Dorsolateral prefrontal cortex (tissue), 120 donors: ENCODE measurements at regions of chrX and their contacts with region 1.

Region 1: GRCh38 chrX:74382613-74383012 is 38.7 kb upstream of the SLC16A2 start:
- DNase-seq: peak; percentile 24 to 74 (median 50)
- H3K4me3 ChIP-seq: no peak overlapping the region
- H3K27ac ChIP-seq: no peak overlapping the region
- H3K27me3 ChIP-seq: peaks cover 0 to 75% (median 36%) of the 10 kb centered on the region in 45 donors
- CTCF ChIP-seq: peak; percentile 33 to 80 (median 68)

Region 2: DNA sequence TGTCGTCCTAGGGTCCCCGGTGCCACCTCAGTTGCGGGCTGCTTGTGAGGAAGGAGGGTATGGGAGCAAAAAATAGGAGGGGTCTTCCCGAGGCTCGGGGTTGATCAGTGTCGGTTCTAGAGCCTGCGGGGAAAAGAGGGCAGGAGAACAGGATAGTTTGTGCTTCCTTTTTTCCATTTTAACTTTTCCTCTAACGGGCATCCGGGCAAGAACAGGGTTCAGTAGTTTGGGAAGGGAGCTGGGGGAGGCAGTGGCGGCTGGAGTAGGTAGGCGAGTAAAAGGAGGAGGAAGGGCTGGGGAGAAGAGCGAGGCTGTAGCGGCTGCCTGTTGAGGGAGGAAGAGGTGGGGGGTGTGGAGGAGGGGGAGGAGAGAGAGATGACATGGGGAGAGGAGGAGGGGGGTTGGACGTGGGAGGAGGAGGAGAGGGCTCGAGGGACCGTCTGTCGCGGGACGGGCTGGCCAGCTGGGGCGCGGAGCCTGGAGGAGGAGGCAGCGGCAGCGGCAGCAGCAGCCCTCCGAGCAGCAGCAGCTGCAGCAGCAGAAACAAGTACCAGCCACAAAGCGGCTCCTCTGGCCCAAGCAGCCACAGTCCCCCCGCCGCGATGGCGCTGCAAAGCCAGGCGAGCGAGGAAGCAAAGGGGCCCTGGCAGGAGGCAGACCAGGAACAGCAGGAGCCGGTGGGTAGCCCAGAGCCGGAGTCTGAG is 38.6 kb after region 1 on chrX and contains the start of gene SLC16A2:
- intact Hi-C with region 1: loop called in 1 of 2 experiments (anchors 2 kb)
- DNase-seq: peak; percentile 47 to 79 (median 64)
- H3K4me3 ChIP-seq: peak within 1 kb of the TSS; percentile 42 to 74 (median 59)
- H3K27ac ChIP-seq: peak within 1 kb of the TSS; percentile 40 to 94 (median 85)
- H3K27me3 ChIP-seq: peaks cover 0 to 82% (median 17%) of the 10 kb centered on the region in 45 donors
- CTCF ChIP-seq: peak in 3 of 56 donors; percentile 8 to 14 (median 9)
- total RNA-seq, gene SLC16A2: 9.2 to 23.2 (median 14.5) TPM

Region 3: DNA sequence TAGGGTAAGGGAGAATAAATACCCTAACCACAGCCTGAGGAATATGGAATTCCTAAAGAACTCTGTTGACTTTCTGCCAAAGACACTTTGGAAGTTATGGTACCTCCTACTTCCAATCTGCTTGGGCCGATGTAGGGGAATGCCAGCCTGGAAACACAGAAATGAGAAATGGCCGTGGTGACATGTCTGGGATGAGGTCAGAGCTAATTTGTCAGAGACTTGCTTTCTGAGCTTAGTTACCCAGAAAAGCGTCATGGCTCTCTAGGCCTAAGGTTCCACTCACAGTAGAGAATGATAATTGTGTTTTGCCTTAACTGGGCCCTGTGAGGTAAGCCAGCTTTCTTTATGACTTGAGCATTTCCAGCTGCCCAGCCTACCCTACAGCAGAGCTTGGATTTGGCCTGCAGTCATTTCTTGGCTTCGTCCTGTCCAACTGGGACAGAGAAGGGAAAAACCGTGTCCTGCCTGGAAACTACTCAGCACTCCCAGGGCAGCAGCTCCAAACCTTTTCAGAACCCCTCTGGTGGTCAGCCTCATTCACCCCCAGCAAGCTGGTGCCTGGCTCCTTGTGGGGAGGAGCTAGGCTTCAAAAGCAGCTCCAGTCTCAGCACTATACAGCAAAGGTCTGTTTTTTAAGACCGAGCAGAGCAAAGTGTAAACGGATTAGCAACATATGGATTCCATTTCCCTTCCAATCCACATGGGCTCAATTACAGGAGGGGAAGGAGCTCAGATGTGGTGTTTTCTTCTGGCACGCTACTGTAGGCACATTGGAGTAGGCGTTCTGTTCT is 139.5 kb after region 1 on chrX:
- intact Hi-C with region 1: no loop called
- DNase-seq: no peak
- H3K4me3 ChIP-seq: no peak overlapping the region
- H3K27ac ChIP-seq: no peak overlapping the region
- H3K27me3 ChIP-seq: peaks cover 0 to 47% (median 5%) of the 10 kb centered on the region in 45 donors
- CTCF ChIP-seq: no peak

Region 4: DNA sequence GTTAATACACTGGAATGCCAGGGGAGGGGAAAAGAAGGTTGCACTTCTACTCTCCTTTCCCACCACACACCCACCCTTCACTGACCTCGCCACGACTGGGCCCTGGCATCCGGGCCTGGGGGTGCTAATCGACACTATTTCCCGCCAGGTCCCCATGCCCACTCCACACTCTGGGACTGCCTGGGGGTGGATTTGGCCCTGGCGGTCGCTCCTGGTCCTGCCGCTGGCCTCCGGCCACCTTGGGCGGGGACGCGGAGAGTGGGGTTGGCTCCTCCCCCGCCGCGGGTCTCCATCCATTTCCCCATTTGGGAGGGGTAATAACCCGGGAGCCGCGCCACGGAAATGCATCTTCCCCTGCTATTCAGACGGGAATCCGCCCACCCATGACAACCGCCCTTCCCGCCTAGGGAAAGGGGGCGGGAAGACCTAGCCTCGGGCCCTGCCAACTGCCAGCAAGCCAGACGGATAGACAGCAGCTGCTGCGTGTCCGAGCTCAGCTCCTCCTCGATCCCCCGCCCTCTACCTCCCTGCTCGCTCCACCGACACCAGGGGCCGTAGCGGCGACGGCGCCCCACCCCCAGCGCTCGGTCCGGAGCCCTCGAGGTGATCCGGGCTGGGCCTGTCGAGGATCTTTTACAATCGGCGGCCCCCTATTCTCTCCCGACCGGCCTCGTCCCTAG is 153.7 kb after region 1 on chrX:
- intact Hi-C with region 1: loop called (anchors 5 kb)
- DNase-seq: peak; percentile 31 to 72 (median 64)
- H3K4me3 ChIP-seq: peak overlapping the region; percentile 36 to 72 (median 56)
- H3K27ac ChIP-seq: peak overlapping the region in 55 of 59 donors; percentile 38 to 87 (median 76)
- H3K27me3 ChIP-seq: peaks cover 0 to 83% (median 19%) of the 10 kb centered on the region in 45 donors
- CTCF ChIP-seq: peak in 14 of 56 donors; percentile 2 to 40 (median 18)

Region 5: GRCh38 chrX:74550295-74550802 is 167.7 kb after region 1 on chrX:
- intact Hi-C with region 1: loop called in 1 of 2 experiments (anchors 5 kb)
- DNase-seq: peak; percentile 69 to 87 (median 81)
- H3K4me3 ChIP-seq: peak overlapping the region in 6 of 59 donors; percentile 3 to 27 (median 12)
- H3K27ac ChIP-seq: no peak overlapping the region
- H3K27me3 ChIP-seq: peaks cover 0 to 47% (median 6%) of the 10 kb centered on the region in 45 donors
- CTCF ChIP-seq: peak; percentile 54 to 99 (median 97)